Caco-2 (cell line): ENCODE measurements at regions of chr19 and their contacts with region 1.

Region 1: DNA sequence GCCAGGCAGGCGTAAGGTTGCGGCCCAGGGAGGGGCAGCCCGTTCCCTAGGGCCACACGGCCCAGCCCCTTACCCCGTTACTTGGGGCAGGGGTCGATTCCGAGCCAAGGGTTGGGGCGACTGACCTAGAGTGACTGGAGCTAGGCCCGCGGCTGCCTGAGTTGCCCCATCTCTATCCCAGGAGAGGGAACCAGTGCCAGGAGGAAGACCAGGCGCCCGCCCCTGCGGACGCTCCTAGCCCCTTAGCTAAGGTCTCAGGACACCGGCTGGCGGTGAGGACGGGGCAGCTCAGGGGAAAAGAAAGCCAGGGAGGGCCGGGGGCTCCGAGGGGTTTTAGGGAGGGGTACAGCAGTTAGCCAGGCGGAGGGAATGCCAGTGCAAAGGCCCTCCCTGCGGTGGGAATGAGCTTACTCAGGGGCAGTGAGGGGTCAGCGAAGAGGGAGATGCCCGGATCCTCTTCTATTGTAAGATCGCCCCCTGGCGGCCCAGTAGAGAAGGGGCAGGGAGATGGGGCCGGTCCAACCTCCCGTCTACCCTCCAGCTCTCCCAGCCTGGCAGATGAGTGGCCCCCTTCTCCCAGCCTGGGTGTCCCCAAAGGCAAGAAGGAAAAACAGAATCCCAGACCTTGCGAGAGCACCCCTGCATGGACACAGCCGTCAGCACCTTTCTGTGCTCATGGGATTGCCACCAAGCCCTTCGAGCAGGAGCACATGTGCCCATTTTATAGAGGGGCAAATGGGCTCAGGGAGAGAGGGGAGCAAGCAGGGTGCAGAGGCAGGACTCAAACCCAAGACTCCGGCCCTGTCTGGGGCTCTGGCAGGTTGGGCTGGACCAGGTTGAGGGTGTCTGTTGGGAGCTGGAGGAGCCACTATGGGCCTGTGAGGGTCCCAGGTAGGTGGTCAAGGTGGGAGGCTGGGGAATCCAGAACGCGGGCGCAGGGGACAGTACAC is 16.3 kb downstream of the CILP2 start:
- DNase-seq: peak in 1 of 2 experiments; percentile 64
- H3K4me3 ChIP-seq: no peak overlapping the region
- H3K4me3 Mint-ChIP-seq: no peak overlapping the region
- H3K27ac Mint-ChIP-seq: no peak overlapping the region
- H3K4me1 ChIP-seq: no peaks in the 10 kb centered on the region
- H3K4me1 Mint-ChIP-seq: no peaks in the 10 kb centered on the region
- H3K27me3 ChIP-seq: no peaks in the 10 kb centered on the region
- H3K27me3 Mint-ChIP-seq: no peaks in the 10 kb centered on the region
- CTCF ChIP-seq: peak; percentile 53 to 69

Region 2: DNA sequence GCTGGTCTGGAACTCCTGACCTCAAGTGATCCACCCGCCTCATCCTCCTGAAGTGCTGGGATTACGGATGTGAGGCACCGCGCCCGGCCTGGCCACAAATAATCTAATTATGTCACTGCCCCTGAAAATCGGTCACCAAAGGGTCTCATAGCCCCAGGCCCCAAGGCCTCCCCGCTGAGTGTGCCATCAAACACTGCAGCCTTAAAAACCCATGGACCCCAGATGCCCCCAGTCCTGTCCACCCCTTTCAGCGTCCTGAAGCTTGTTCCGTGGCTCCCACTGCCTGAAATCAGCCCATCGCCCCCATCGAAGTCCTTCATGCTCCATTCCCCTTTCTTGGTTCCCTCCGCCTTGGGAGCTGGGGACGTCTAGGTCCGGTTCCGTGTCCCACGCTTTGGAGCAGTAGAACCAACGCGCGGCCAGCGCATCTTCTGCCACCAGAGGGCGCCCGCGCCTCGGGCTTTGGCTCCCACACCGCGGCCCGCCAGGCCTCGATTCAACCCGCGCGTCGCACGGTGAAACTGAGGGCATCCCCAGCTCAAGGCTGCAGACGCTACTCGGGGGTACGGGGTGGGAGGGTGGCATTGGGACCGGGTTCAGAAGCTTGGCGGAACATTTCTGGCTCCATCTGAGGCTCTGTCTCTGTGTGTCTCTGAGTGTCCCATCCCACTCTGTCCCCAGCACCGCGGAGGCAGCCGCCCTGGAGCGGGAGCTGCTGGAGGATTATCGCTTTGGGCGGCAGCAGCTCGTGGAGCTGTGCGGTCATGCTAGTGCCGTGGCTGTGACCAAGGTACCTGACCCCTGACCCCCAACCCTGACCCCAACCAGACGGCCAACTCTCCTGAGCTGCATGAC is 22.2 kb before region 1 on chr19:
- CTCF ChIA-PET with region 1: interaction called, 12 read pairs
- POLR2A ChIA-PET with region 1: no interaction called
- intact Hi-C with region 1: loop called (anchors 2 kb)
- DNase-seq: peak; percentile 71 to 85
- H3K4me3 ChIP-seq: no peak overlapping the region
- H3K4me3 Mint-ChIP-seq: no peak overlapping the region
- H3K27ac Mint-ChIP-seq: no peak overlapping the region
- H3K4me1 ChIP-seq: no peaks in the 10 kb centered on the region
- H3K4me1 Mint-ChIP-seq: peaks cover 10% of the 10 kb centered on the region
- H3K27me3 ChIP-seq: no peaks in the 10 kb centered on the region
- H3K27me3 Mint-ChIP-seq: no peaks in the 10 kb centered on the region
- CTCF ChIP-seq: peak; percentile 83 to 96

Region 3: DNA sequence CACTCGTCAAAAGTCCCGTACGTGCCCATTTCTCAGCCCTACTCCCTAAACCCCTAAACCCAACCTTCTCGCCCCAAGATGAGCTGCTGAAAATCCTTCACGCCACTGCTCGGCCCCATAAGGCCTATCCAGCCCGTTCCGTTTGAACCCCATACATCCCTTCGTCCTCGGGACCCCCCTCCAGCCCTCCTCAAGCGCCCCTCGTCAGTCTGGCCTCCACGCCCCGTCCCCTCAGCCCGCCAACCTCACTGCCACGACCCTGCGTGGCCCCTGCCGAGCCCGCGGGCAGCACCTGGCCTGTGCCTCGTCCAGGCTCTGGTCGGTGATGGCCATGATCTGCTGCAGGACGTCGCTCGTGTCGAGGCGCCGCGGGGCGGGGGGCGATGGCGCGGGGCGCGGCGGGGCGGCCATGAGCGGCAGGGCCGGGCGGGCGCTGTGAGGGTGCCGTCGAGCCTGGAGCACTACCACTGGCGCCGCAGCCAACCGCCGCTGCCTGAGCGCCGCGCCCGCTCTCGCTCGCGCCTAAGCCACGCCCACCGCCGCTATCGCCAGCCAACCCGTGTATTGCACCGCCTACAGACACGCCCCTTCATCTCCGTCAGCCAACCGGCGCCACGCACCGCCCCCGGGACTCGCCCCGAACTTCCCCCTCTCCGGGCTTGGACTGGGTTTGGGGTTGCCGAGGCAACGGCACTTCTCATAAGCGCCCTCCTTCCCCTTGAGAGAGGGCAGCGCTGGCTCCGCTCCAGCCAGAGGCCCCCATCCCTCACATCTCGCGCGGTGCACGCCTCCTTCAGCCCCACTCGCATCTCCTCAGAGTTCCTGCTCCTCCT is 64.1 kb after region 1 on chr19 and contains the start of gene PBX4:
- CTCF ChIA-PET with region 1: interaction called, 3 read pairs
- POLR2A ChIA-PET with region 1: no interaction called
- intact Hi-C with region 1: loop called (anchors 5 kb)
- DNase-seq: peak; percentile 96
- H3K4me3 ChIP-seq: peak within 1 kb of the TSS; percentile 69
- H3K4me3 Mint-ChIP-seq: peak within 1 kb of the TSS; percentile 70
- H3K27ac Mint-ChIP-seq: peak within 1 kb of the TSS; percentile 42
- H3K4me1 ChIP-seq: peaks cover 9% of the 10 kb centered on the region
- H3K4me1 Mint-ChIP-seq: peaks cover 5% of the 10 kb centered on the region
- H3K27me3 ChIP-seq: no peaks in the 10 kb centered on the region
- H3K27me3 Mint-ChIP-seq: no peaks in the 10 kb centered on the region
- CTCF ChIP-seq: no peak
- total RNA-seq, gene PBX4: 3.5 and 3.6 TPM in 2 replicates